Naive thymus-derived CD4-positive, alpha-beta T cell (primary cell): ENCODE measurements at regions of chr2 and their contacts with region 1.

Region 1: GRCh38 chr2:143422681-143423080 is 293.5 kb downstream of the ARHGAP15 start:
- DNase-seq: peak in 3 of 9 donors; percentile 9 to 25 (median 10)
- ATAC-seq: peak; percentile 75
- H3K4me3 ChIP-seq: no peak overlapping the region
- H3K4me3 Mint-ChIP-seq: peak overlapping the region in 1 of 10 donors; percentile 1
- H3K27ac ChIP-seq: no peak overlapping the region
- H3K27ac Mint-ChIP-seq: peak overlapping the region in 5 of 9 donors; percentile 4 to 80 (median 29)
- H3K4me1 ChIP-seq: peaks cover 3 to 6% of the 10 kb centered on the region in 2 donors
- H3K4me1 Mint-ChIP-seq: peaks cover 29 to 82% (median 69%) of the 10 kb centered on the region in 7 donors
- H3K27me3 ChIP-seq: no peaks in the 10 kb centered on the region
- H3K27me3 Mint-ChIP-seq: no peaks in the 10 kb centered on the region

Region 2: GRCh38 chr2:143435131-143435530 is 12.4 kb after region 1 on chr2:
- CTCF ChIA-PET with region 1: no interaction called
- POLR2A ChIA-PET with region 1: no interaction called
- intact Hi-C with region 1: loop called in 1 of 2 experiments (anchors 1 kb)
- DNase-seq: no peak
- ATAC-seq: no peak
- H3K4me3 ChIP-seq: no peak overlapping the region
- H3K4me3 Mint-ChIP-seq: no peak overlapping the region
- H3K27ac ChIP-seq: no peak overlapping the region
- H3K27ac Mint-ChIP-seq: peak overlapping the region in 2 of 9 donors; percentile 17 to 45
- H3K4me1 ChIP-seq: no peaks in the 10 kb centered on the region
- H3K4me1 Mint-ChIP-seq: peaks cover 5 to 54% (median 41%) of the 10 kb centered on the region in 7 donors
- H3K27me3 ChIP-seq: no peaks in the 10 kb centered on the region
- H3K27me3 Mint-ChIP-seq: no peaks in the 10 kb centered on the region